Activated CD4-positive, alpha-beta T cell treated with anti-CD3 and anti-CD28 coated beads for 36 hours (primary cell): ENCODE measurements at regions of chr12 and their contacts with region 1.

Region 1: DNA sequence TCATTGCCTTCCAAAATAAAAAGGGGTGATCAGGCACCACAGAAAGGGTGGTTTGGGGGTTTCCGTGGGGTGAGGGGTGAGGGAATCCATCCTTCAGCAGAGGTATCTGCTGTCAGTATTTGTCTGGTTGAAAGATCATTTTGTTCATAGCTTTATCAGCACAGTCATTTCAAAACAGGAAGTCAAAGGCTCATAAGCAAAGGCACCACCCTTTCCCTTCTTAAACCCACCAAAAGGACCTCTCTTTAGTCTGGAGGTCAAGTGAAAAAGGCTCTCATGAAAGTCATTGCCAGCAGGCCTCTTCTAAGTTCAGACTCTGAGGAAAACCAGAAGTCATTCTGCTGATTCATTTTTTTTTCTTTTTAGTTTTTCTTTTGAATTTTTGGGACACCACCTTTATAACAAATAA is 6.2 kb downstream of the CHST11 start:
- DNase-seq: peak; percentile 59
- ATAC-seq: peak; percentile 54
- H3K4me3 Mint-ChIP-seq: peak overlapping the region; percentile 56
- H3K27ac Mint-ChIP-seq: peak overlapping the region; percentile 97
- H3K4me1 Mint-ChIP-seq: peaks cover 80% of the 10 kb centered on the region
- H3K27me3 Mint-ChIP-seq: no peaks in the 10 kb centered on the region

Region 2: DNA sequence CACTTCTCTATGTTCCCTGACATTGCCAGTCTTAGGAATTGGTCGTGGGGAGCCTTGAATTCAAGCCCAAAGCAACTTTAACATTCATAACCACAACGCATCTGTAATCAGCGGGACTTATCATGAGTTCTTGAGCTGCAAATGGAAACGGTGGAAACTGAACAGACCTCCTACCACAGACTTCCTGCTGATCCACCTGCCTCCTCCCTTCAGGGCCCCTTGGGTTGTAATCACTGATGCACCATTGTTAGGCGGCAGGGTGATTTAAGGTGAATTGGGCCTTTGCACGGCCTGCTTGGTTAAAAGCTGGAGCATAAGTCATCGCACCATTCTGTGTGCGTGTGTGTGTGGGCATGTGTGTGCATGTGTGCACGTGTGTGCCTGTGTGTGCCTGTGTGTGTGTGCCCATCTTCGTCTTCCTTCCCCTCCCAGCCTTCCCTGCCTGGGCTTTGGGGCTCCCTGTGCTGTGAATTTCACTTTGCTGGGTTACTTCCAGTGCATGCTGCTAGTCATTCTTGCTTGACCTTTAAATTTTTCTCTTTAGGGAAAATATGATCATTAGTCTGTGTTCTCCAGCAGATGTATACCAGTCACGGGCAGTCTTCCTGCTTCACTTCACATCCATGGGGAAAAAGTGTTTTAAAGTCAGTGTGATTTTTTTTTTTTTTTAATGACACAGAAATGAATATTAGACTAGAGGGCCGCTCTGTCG is 22.9 kb after region 1 on chr12:
- CTCF ChIA-PET with region 1: interaction called, 4 read pairs
- POLR2A ChIA-PET with region 1: no interaction called
- intact Hi-C with region 1: loop called in 1 of 2 experiments (anchors 2 kb)
- DNase-seq: peak; percentile 71
- ATAC-seq: peak; percentile 85
- H3K4me3 Mint-ChIP-seq: peak overlapping the region; percentile 37
- H3K27ac Mint-ChIP-seq: peak overlapping the region; percentile 79
- H3K4me1 Mint-ChIP-seq: peaks cover 92% of the 10 kb centered on the region
- H3K27me3 Mint-ChIP-seq: no peaks in the 10 kb centered on the region

Region 3: DNA sequence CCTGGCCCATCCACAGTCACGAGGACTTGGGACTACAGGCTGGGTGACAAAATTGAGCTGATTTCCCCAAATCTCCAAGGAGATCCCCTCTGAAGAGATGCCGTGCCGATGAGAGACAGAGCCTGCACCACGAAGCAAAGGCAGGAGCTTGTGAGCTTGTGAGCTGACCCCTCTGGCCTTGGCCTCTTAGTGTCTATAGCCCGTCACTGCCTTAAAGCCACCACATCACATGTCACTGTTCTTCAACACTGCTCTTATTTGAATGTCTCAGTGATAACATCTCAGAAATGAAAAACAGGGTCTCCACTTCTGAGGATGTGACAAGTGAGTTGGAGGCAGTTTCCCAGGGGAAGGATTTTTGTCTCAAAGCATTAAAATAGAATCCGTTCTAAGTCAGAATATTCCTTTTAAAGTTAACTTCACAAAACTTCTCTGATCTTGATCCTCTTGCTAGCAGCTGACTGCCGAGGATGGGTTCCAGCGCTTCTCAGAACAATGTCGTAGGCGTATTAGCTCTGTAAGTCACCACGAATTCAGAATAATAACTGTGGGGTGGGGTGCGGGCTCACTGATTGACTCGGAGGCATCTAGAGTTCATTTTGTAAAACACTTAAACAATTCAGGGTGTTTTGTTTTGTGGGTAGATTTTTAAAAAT is 31.3 kb after region 1 on chr12:
- CTCF ChIA-PET with region 1: interaction called, 16 read pairs
- POLR2A ChIA-PET with region 1: interaction called, 14 read pairs
- intact Hi-C with region 1: loop called (anchors 1 kb)
- DNase-seq: peak; percentile 88
- ATAC-seq: peak; percentile 72
- H3K4me3 Mint-ChIP-seq: peak overlapping the region; percentile 35
- H3K27ac Mint-ChIP-seq: peak overlapping the region; percentile 85
- H3K4me1 Mint-ChIP-seq: peaks cover 88% of the 10 kb centered on the region
- H3K27me3 Mint-ChIP-seq: no peaks in the 10 kb centered on the region

Region 4: DNA sequence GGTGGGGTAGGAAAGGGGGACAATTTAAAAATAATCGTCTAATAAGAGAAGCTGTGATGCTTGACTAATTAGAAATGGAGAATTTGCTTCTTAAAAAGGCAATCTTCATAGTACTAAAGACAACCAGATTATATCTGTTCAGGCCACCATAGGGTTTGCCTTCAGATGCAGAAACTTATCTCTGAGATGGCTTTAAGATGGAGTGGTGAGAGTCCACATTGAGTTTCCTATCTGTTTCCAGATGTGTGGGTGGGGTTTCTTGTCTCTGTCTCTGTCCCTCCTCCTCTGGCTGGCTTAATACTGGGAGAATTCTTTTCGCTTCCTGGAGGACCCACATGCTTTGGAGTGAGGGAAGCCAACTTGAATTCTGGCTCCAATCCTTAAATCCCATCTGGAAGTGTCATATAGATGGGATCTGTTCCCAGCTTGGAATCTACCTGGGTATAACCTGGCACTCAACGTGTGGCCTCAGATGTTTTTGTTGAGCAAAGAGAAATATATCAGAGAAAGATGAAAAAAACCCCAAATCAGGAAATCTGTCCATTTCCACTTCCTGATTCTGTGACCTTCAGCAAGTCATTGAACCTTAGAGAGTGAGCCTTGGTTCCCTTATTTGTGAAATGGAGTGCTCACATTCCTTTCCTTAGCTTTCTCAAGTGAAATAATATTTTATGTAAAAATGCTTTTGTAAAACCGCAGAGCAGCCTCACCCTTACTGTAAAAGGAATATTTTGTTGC is 60.2 kb after region 1 on chr12:
- CTCF ChIA-PET with region 1: no interaction called
- POLR2A ChIA-PET with region 1: no interaction called
- intact Hi-C with region 1: no loop called
- DNase-seq: no peak
- ATAC-seq: peak; percentile 49
- H3K4me3 Mint-ChIP-seq: no peak overlapping the region
- H3K27ac Mint-ChIP-seq: peak overlapping the region; percentile 26
- H3K4me1 Mint-ChIP-seq: peaks cover 64% of the 10 kb centered on the region
- H3K27me3 Mint-ChIP-seq: no peaks in the 10 kb centered on the region

Region 5: DNA sequence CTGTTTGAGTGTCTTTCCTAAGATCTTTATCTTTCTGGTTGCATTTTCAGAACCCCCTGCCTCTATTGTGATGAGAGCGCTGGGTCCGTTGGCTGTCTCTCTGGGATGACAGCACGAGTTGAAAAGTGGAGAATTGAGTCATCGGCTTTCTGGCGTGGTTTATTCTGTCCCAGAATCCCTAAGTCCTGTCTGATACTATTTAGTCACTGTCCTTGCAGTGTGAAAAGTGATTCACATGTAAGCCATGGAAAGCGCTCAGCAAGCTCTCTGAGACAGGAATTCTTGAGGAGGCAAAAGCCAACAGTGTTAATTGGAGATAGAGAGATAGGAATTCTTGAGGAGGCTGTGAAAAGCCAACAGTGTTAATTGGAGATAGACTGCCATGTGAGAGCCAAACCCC is 115.5 kb after region 1 on chr12:
- CTCF ChIA-PET with region 1: no interaction called
- POLR2A ChIA-PET with region 1: no interaction called
- intact Hi-C with region 1: loop called in 1 of 2 experiments (anchors 1 kb)
- DNase-seq: peak; percentile 63
- ATAC-seq: peak; percentile 65
- H3K4me3 Mint-ChIP-seq: no peak overlapping the region
- H3K27ac Mint-ChIP-seq: peak overlapping the region; percentile 8
- H3K4me1 Mint-ChIP-seq: peaks cover 75% of the 10 kb centered on the region
- H3K27me3 Mint-ChIP-seq: no peaks in the 10 kb centered on the region